Naive thymus-derived CD4-positive, alpha-beta T cell (primary cell): ENCODE measurements at regions of chr20 and their contacts with region 1.

Region 1: GRCh38 chr20:20052074-20052970 is at the starts of genes CFAP61 and CRNKL1:
- DNase-seq: peak; percentile 95 to 99 (median 98)
- ATAC-seq: peak; percentile 96
- H3K4me3 ChIP-seq: peak within 1 kb of the TSS; percentile 99
- H3K4me3 Mint-ChIP-seq: peak within 1 kb of the TSS; percentile 94 to 100 (median 99)
- H3K27ac ChIP-seq: peak within 1 kb of the TSS; percentile 93
- H3K27ac Mint-ChIP-seq: peak within 1 kb of the TSS; percentile 94 to 100 (median 98)
- H3K4me1 ChIP-seq: peaks cover 0 to 16% of the 10 kb centered on the region in 2 donors
- H3K4me1 Mint-ChIP-seq: peaks cover 16 to 42% (median 31%) of the 10 kb centered on the region in 7 donors
- H3K27me3 ChIP-seq: no peaks in the 10 kb centered on the region
- H3K27me3 Mint-ChIP-seq: peaks cover 0 to 6% (median 0%) of the 10 kb centered on the region in 5 donors
- total RNA-seq, gene CFAP61: not detected
- total RNA-seq, gene CRNKL1: 17.4 to 32.1 (median 21.6) TPM

Region 2: DNA sequence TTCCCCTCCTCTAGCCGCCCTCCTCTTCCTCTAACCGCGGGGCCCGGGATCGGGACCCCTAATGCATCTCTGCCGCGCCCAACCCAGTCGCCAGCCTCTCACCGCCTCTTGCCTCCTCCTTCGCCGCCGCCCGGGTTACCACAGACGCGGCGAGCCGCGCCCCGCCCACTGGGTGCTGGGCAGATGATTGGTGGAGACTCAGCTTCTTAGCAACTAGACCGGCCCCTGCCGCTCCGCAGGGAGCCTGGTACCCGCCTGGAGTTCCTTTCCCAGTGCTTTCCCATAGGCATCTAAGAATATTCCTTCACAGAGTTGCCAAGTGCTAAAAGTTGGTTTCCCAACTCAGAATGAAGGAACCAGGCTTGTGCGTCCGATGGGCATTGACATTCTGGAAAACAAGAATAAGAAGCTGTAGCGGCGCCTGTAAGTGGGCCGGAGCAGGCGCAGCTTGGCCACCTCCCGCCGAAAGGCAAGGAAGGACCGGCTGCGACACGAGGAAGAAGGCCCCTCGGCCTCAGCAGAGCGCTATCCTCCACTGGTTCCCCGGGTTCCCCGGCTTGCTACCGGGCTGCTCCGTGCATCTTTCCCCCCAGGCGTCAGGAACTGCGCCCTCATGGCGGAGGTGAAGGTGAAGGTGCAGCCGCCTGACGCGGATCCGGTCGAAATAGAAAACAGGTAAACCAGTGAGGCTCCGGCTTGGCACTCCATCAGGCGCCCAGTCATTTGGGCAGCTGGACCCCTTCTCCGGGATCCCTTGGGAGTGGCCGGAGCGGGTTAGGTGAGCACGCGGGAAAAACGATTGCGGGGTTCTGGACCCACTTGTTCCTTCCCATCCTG is 1585.2 kb before region 1 on chr20 and contains the starts of genes DZANK1 and POLR3F:
- CTCF ChIA-PET with region 1: no interaction called
- POLR2A ChIA-PET with region 1: no interaction called
- intact Hi-C with region 1: loop called (anchors 1 kb)
- DNase-seq: peak; percentile 85 to 93 (median 92)
- ATAC-seq: peak; percentile 97
- H3K4me3 ChIP-seq: peak within 1 kb of the TSS; percentile 93
- H3K4me3 Mint-ChIP-seq: peak within 1 kb of the TSS; percentile 89 to 99 (median 97)
- H3K27ac ChIP-seq: peak within 1 kb of the TSS; percentile 77
- H3K27ac Mint-ChIP-seq: peak within 1 kb of the TSS; percentile 93 to 99 (median 98)
- H3K4me1 ChIP-seq: peaks cover 7 to 14% of the 10 kb centered on the region in 2 donors
- H3K4me1 Mint-ChIP-seq: peaks cover 25 to 44% (median 37%) of the 10 kb centered on the region in 7 donors
- H3K27me3 ChIP-seq: no peaks in the 10 kb centered on the region
- H3K27me3 Mint-ChIP-seq: no peaks in the 10 kb centered on the region
- total RNA-seq, gene DZANK1: 1.2 to 3.5 (median 2.9) TPM
- total RNA-seq, gene POLR3F: 5.0 to 13.5 (median 11.5) TPM

Region 3: DNA sequence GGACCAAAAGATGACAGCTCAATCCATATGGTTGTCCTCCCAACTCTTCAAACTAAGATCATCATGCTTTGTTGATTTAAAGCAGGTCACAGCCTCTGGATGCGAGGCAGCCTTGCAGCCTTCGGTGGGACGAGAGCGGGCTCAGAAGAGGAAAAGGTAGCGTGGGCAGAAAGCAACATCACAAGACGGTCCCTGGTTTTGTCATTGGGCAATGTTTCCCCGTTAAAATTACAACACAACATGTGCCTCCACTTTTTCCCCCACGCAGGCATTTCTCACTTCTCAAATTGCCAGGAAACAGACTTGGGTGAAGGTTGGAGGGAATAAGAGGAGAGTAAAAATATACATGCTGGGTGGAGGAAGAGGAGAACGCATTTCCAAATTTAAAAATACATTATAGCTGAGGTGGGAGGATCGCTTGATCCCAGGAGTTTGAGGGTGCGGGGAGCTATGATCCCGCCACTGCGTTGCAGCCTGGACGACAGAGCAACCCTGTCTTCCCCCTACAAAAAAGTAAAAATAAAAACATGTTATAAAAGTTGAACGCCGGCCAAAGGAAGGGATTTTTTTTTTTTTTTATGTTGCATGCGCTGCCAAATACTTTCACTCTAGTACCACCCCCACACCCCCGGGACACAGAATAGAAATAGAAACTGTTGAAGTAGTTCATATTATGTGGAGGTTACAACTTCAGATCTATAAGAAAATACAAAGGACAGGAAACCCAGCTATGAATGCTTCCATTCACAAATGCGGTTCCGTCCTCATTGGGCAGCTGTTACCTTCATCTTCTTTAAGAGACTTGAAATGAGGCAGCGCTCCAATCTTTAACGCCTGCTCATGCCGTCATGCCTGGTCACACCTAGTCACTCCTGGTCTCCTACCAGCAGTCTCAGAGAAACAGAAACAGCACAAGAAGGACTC is 49.0 kb before region 1 on chr20:
- CTCF ChIA-PET with region 1: no interaction called
- POLR2A ChIA-PET with region 1: no interaction called
- intact Hi-C with region 1: no loop called
- DNase-seq: peak in 6 of 9 donors; percentile 5 to 23 (median 13)
- ATAC-seq: peak; percentile 61
- H3K4me3 ChIP-seq: peak overlapping the region; percentile 40
- H3K4me3 Mint-ChIP-seq: peak overlapping the region; percentile 63 to 87 (median 76)
- H3K27ac ChIP-seq: no peak overlapping the region
- H3K27ac Mint-ChIP-seq: peak overlapping the region in 2 of 9 donors; percentile 7 to 28
- H3K4me1 ChIP-seq: peaks cover 0 to 7% of the 10 kb centered on the region in 2 donors
- H3K4me1 Mint-ChIP-seq: peaks cover 12 to 20% (median 15%) of the 10 kb centered on the region in 7 donors
- H3K27me3 ChIP-seq: peaks cover 0 to 3% of the 10 kb centered on the region in 2 donors
- H3K27me3 Mint-ChIP-seq: peaks cover 39 to 55% (median 53%) of the 10 kb centered on the region in 5 donors

Region 4: DNA sequence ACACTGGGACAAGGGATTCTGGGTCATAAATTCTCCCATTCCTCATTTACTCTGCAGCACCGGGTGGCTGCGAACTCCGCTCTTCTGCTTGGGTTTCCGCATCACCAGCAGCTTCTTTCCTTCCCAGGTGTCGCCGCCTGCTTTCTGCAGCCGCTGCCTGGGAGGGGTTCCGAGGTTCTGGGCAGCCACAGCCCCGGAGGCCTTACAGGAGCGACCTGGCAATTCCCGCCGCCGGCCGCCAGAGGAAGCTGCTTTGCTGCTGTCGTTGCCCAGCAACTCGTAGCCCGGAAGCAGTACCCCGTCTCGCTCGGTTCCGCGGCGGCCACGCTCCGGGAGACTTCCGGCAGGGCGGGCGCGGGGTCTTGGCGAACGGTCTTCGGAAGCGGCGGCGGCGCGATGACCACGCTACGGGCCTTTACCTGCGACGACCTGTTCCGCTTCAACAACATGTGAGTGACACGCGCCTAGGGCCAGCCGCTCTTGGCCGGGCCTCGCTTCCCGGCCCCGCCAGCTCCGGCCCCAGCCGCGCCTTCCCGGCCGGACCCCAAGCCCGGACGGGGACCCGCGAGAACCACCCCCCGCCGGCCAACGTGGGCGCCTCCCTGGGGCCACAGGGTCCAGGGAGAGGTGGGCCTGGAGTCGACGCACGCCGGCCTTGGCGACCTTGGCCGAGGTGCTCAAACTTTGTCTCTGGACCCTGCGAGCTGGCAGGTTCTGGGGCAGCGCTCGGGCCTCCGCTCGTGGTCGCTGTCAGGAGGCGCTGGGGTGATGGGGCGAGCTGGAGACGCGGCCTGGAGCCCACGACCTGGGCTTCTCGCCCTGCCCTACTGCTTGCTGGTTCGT is 35.1 kb before region 1 on chr20 and contains the start of gene NAA20:
- CTCF ChIA-PET with region 1: interaction called, 29 read pairs
- POLR2A ChIA-PET with region 1: interaction called, 31 read pairs
- intact Hi-C with region 1: loop called (anchors 1 kb)
- DNase-seq: peak; percentile 80 to 89 (median 87)
- ATAC-seq: peak; percentile 99
- H3K4me3 ChIP-seq: peak within 1 kb of the TSS; percentile 77
- H3K4me3 Mint-ChIP-seq: peak within 1 kb of the TSS; percentile 88 to 96 (median 93)
- H3K27ac ChIP-seq: peak within 1 kb of the TSS; percentile 83
- H3K27ac Mint-ChIP-seq: peak within 1 kb of the TSS; percentile 90 to 96 (median 94)
- H3K4me1 ChIP-seq: peaks cover 9 to 28% of the 10 kb centered on the region in 2 donors
- H3K4me1 Mint-ChIP-seq: peaks cover 38 to 68% (median 63%) of the 10 kb centered on the region in 7 donors
- H3K27me3 ChIP-seq: no peaks in the 10 kb centered on the region
- H3K27me3 Mint-ChIP-seq: no peaks in the 10 kb centered on the region
- total RNA-seq, gene NAA20: 21.5 to 52.6 (median 28.3) TPM

Region 5: DNA sequence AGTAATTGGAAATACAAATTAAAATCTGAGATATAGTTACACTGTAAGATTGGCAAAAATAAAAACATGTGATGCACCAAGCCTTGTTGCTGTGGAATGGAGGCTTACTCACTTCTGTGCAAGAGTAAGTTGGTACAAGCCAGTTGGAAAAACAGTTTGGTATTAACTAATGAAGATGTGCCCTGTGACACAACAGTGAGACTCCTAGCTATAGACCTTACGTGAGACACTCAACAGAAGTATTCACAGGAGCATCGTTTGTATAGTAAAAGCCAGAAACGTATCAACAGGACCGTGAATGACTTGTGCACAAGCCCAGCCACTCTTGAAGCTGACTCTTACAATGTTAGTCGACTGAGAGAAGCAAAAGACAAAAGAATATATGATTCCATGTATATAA is 20.5 kb before region 1 on chr20:
- CTCF ChIA-PET with region 1: no interaction called
- POLR2A ChIA-PET with region 1: interaction called, 4 read pairs
- intact Hi-C with region 1: loop called in 1 of 2 experiments (anchors 2 kb)
- DNase-seq: no peak
- ATAC-seq: no peak
- H3K4me3 ChIP-seq: no peak overlapping the region
- H3K4me3 Mint-ChIP-seq: no peak overlapping the region
- H3K27ac ChIP-seq: no peak overlapping the region
- H3K27ac Mint-ChIP-seq: peak overlapping the region in 2 of 9 donors; percentile 34 to 74
- H3K4me1 ChIP-seq: no peaks in the 10 kb centered on the region
- H3K4me1 Mint-ChIP-seq: peaks cover 0 to 7% (median 0%) of the 10 kb centered on the region in 7 donors
- H3K27me3 ChIP-seq: no peaks in the 10 kb centered on the region
- H3K27me3 Mint-ChIP-seq: no peaks in the 10 kb centered on the region

Region 6: GRCh38 chr20:21099751-21100577 is 1047.6 kb after region 1 on chr20:
- CTCF ChIA-PET with region 1: no interaction called
- POLR2A ChIA-PET with region 1: no interaction called
- intact Hi-C with region 1: loop called in 1 of 2 experiments (anchors 5 kb)
- DNase-seq: peak in 5 of 9 donors; percentile 32 to 54 (median 40)
- ATAC-seq: peak; percentile 64
- H3K4me3 ChIP-seq: peak overlapping the region; percentile 51
- H3K4me3 Mint-ChIP-seq: peak overlapping the region; percentile 78 to 91 (median 84)
- H3K27ac ChIP-seq: no peak overlapping the region
- H3K27ac Mint-ChIP-seq: peak overlapping the region in 5 of 9 donors; percentile 18 to 90 (median 38)
- H3K4me1 ChIP-seq: peaks cover 20 to 34% of the 10 kb centered on the region in 2 donors
- H3K4me1 Mint-ChIP-seq: peaks cover 16 to 50% (median 45%) of the 10 kb centered on the region in 7 donors
- H3K27me3 ChIP-seq: peaks cover 18 to 59% of the 10 kb centered on the region in 2 donors
- H3K27me3 Mint-ChIP-seq: peaks cover 76 to 93% (median 90%) of the 10 kb centered on the region in 5 donors

Region 7: GRCh38 chr20:21548390-21549035 is 1496.2 kb after region 1 on chr20:
- CTCF ChIA-PET with region 1: no interaction called
- POLR2A ChIA-PET with region 1: no interaction called
- intact Hi-C with region 1: loop called in 1 of 2 experiments (anchors 2 kb)
- DNase-seq: peak in 8 of 9 donors; percentile 43 to 86 (median 82)
- ATAC-seq: peak; percentile 91
- H3K4me3 ChIP-seq: peak overlapping the region; percentile 51
- H3K4me3 Mint-ChIP-seq: peak overlapping the region; percentile 60 to 81 (median 75)
- H3K27ac ChIP-seq: peak overlapping the region; percentile 79
- H3K27ac Mint-ChIP-seq: peak overlapping the region; percentile 88 to 97 (median 94)
- H3K4me1 ChIP-seq: peaks cover 4 to 35% of the 10 kb centered on the region in 2 donors
- H3K4me1 Mint-ChIP-seq: peaks cover 10 to 48% (median 37%) of the 10 kb centered on the region in 7 donors
- H3K27me3 ChIP-seq: no peaks in the 10 kb centered on the region
- H3K27me3 Mint-ChIP-seq: peaks cover 0 to 3% (median 0%) of the 10 kb centered on the region in 5 donors